Activated CD4-positive, alpha-beta T cell treated with anti-CD3 and anti-CD28 coated beads, Interleukin-2, amount 10 ng/mL, durations not matched to agents 24 days and 14 days (primary cell): ENCODE measurements at regions of chr2 and their contacts with region 1.

Region 1: GRCh38 chr2:158305501-158305900 is 151.1 kb downstream of the CCDC148 start:
- DNase-seq: no peak
- H3K4me3 Mint-ChIP-seq: no peak overlapping the region
- H3K27ac Mint-ChIP-seq: no peak overlapping the region
- H3K4me1 Mint-ChIP-seq: no peaks in the 10 kb centered on the region
- H3K27me3 Mint-ChIP-seq: no peaks in the 10 kb centered on the region

Region 2: GRCh38 chr2:157761520-157761919 is 544.0 kb before region 1 on chr2:
- intact Hi-C with region 1: no loop called
- DNase-seq: no peak
- H3K4me3 Mint-ChIP-seq: no peak overlapping the region
- H3K27ac Mint-ChIP-seq: no peak overlapping the region
- H3K4me1 Mint-ChIP-seq: peaks cover 3% of the 10 kb centered on the region
- H3K27me3 Mint-ChIP-seq: no peaks in the 10 kb centered on the region

Region 3: DNA sequence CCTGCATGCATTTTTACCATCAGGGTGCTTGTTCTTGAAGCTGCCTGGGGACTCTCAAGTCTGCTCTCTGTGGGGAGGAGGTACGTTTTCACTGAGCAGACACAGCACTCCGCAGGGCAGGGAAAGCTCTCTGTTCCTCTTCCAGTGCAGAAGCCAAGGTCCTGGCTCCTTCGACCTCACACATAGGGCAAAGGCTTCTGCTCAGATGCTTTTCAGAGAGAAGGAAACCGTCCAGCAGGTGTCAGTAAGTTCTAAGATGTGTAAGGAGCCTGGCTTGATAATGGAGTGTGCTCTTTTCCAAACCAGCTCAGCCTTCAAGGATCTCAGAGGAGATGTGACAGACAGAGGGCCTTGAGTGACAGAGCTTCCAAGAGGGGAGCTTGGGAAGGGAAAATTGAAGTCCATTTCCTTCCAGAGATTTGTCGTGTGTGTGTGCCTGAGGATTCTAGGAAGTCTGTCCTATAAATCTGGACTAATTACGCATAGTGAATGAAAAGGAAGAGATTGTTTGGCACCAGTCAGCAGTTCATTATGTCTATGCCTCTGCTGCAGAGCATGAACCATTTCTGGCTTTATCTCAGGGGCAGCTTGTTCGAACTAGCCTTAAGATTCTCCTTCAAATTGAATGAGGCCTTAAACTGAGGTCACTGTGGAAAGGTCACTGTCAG is 271.2 kb before region 1 on chr2:
- intact Hi-C with region 1: loop called (anchors 10 kb)
- DNase-seq: peak; percentile 74
- H3K4me3 Mint-ChIP-seq: no peak overlapping the region
- H3K27ac Mint-ChIP-seq: no peak overlapping the region
- H3K4me1 Mint-ChIP-seq: no peaks in the 10 kb centered on the region
- H3K27me3 Mint-ChIP-seq: peaks cover 25% of the 10 kb centered on the region